ENCODE measurements at regions of chr2 and their contacts with region 1.

Region 1: GRCh38 chr2:235135990-235136561 is 184.3 kb downstream of the SH3BP4 start:
- DNase-seq: no peak
- ATAC-seq: peak; percentile 63
- H3K4me3 ChIP-seq: no peak overlapping the region
- H3K27ac ChIP-seq: no peak overlapping the region
- H3K4me1 ChIP-seq: no peaks in the 10 kb centered on the region
- H3K27me3 ChIP-seq: no peaks in the 10 kb centered on the region
- CTCF ChIP-seq: peak; percentile 53 to 60 (median 54); a peak in 4 of 6 replicates
- EP300 ChIP-seq: no peak
- POLR2A ChIP-seq: no peak
- RAD21 ChIP-seq: peak; percentile 50

Region 2: DNA sequence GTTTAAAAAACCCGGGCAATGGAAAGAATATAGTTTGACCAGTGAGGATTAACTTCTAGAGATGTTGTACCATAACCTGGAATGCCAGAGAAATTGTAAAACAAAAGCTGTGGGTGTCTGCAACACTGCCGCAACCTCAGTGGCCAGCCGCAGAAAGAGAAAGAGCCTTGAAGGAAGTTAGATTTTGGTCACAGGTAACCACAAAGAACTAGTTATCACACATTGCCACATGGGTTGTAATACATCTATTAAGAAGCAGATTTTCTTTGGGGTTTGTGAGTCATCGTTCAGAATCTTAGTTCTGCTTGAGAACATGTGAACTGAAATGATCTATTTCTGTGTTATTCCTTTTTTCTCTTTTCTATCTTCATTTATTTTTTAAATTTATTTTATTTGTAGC is 134.9 kb after region 1 on chr2:
- CTCF ChIA-PET with region 1: no interaction called
- POLR2A ChIA-PET with region 1: no interaction called
- RAD21 ChIA-PET with region 1: no interaction called
- SMC1A ChIA-PET with region 1: no interaction called
- in situ Hi-C with region 1: no loop called
- intact Hi-C with region 1: no loop called
- DNase-seq: peak; percentile 25
- ATAC-seq: peak; percentile 83
- H3K4me3 ChIP-seq: no peak overlapping the region
- H3K27ac ChIP-seq: no peak overlapping the region; the same call in 1 of the 2 replicates
- H3K4me1 ChIP-seq: peaks cover 9% of the 10 kb centered on the region
- H3K27me3 ChIP-seq: no peaks in the 10 kb centered on the region; a peak in 1 of 4 replicates
- CTCF ChIP-seq: no peak
- EP300 ChIP-seq: peak in 1 of 2 experiments; percentile 56; a peak in 1 of 4 replicates
- POLR2A ChIP-seq: no peak
- RAD21 ChIP-seq: no peak

Region 3: GRCh38 chr2:235595422-235596010 is 459.4 kb after region 1 on chr2:
- CTCF ChIA-PET with region 1: interaction called, 29 read pairs
- POLR2A ChIA-PET with region 1: no interaction called
- RAD21 ChIA-PET with region 1: interaction called, 4 read pairs
- SMC1A ChIA-PET with region 1: no interaction called
- in situ Hi-C with region 1: no loop called
- intact Hi-C with region 1: loop called (anchors 2 kb)
- DNase-seq: no peak
- ATAC-seq: peak; percentile 76
- H3K4me3 ChIP-seq: no peak overlapping the region
- H3K27ac ChIP-seq: no peak overlapping the region
- H3K4me1 ChIP-seq: no peaks in the 10 kb centered on the region
- H3K27me3 ChIP-seq: no peaks in the 10 kb centered on the region
- CTCF ChIP-seq: peak; percentile 74 to 82 (median 81)
- EP300 ChIP-seq: no peak
- POLR2A ChIP-seq: no peak
- RAD21 ChIP-seq: peak; percentile 56

Region 4: DNA sequence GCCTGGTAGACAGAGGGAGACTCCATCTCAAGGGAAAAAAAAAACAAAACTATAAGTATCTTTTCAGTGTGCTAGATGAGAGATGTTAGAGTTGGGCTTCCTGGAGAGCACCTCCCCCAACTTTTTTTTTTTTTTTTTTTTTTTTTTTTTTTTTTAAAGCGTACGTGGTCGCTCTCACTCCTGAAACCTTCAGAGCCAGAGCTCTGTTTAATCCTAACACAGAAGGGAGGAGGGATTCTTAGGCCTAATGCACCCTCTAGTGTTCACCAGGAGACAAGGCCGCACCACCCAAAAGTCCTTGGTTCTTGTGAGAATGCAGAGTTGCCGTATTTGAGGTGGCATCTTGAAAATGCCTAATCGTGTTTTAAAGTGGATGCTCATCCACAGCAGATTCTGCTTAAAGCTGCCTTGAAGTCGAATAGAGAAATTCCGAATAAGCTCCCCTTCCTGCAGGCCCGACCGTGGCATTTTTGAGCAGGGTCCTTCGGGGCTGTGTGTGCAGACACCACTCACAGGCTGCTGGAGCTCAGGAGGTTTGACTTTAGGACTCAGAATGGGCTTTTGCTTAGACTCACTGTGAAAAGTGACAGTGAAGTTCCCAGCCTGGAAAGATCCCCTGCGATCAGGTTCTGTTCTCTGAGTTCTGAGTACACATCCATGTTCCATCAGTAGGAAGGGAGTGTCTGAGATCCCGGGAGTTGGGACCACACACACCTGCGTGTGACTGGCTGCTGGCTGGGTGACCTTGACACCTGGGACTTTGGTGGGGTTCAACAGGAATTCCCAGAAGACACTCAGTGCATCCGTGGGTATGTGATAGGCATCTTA is 610.4 kb after region 1 on chr2:
- CTCF ChIA-PET with region 1: interaction called, 5 read pairs
- POLR2A ChIA-PET with region 1: no interaction called
- RAD21 ChIA-PET with region 1: no interaction called
- SMC1A ChIA-PET with region 1: no interaction called
- in situ Hi-C with region 1: loop called (anchors 10 kb)
- intact Hi-C with region 1: loop called (anchors 1 kb)
- DNase-seq: no peak
- ATAC-seq: peak; percentile 97
- H3K4me3 ChIP-seq: no peak overlapping the region
- H3K27ac ChIP-seq: no peak overlapping the region
- H3K4me1 ChIP-seq: no peaks in the 10 kb centered on the region
- H3K27me3 ChIP-seq: peaks cover 0 to 1% of the 10 kb centered on the region in 2 experiments; a peak in 2 of 4 replicates
- CTCF ChIP-seq: peak; percentile 81 to 86 (median 81)
- EP300 ChIP-seq: no peak
- POLR2A ChIP-seq: no peak
- RAD21 ChIP-seq: peak; percentile 84